ENCODE measurements at regions of chr18 and their contacts with region 1.

Region 1: DNA sequence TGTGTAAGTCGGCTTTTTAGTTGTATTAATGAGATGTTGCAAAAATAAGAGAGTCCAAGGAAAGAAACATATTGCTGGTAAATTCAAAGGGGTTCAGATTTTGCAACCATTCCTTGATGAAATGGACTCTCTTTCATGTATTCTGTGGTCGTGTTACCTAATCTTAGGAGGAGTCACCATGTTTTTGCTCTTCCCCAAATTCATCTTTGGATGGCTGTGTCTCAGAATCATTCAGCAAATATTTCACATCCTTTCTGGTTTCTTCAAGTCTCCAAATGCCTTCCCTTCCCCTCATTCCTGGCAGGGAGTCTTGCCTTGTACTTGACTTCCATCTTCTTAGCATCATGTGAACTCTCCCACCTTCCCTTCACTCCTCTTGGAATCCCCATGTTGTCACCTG is 66.1 kb downstream of the PTPRM start:
- DNase-seq: no peak
- ATAC-seq: no peak

Region 2: DNA sequence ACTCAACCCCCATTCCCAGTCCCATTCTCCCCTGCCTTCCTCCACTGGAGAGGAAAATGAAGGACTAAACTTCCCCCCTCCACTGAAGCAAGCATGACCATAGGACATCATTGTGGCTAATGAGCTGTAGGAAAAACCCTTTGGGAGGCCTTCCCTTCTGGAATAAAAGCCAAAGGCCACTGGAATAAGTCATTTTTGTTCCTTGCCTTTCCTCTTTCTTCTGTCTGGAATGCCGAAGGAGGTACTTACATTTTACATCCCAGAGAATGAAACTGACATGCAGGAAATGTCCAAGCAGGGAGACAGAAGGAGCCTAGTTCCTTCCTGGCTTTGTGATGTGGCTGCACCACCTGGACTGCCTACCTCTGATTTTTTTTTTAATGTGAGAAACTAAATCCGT is 75.2 kb before region 1 on chr18:
- intact Hi-C with region 1: no loop called
- DNase-seq: no peak
- ATAC-seq: no peak

Region 3: GRCh38 chr18:7584646-7585275 is 48.4 kb before region 1 on chr18:
- intact Hi-C with region 1: loop called (anchors 5 kb)
- DNase-seq: no peak
- ATAC-seq: peak; percentile 55

Measured in Right ventricle myocardium inferior (tissue), 1 donor.